Heart right ventricle (tissue), 16 donors: ENCODE measurements at regions of chr15 and their contacts with region 1.

Region 1: GRCh38 chr15:49923671-49924070 is 195.4 kb downstream of the ATP8B4 start:
- DNase-seq: no peak
- ATAC-seq: no peak
- H3K4me3 ChIP-seq: no peak overlapping the region
- H3K27ac ChIP-seq: no peak overlapping the region
- H3K4me1 ChIP-seq: peaks cover 0 to 9% (median 2%) of the 10 kb centered on the region in 9 donors
- H3K27me3 ChIP-seq: no peaks in the 10 kb centered on the region
- CTCF ChIP-seq: no peak

Region 2: DNA sequence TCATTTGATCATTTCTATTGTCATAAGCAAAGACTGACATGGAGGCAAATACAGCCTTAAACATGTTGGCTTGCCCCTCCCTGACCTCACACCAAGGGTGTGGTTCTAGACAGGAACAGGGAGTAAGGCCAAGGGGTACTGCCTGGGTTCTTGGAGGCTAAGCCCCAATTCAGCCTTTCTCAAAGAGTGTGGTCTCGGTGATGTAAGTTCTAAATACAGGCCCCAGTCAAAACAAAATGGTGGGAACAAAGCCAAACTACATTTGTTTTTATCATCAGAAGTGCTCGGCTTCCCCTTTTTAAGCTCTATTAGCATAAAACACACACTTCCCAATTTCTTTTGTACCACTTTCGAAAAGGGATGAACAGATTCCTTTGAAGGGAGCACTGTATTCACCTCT is 65.8 kb after region 1 on chr15:
- intact Hi-C with region 1: loop called in 1 of 10 experiments (anchors 5 kb)
- DNase-seq: no peak
- ATAC-seq: peak in 7 of 8 donors; percentile 62 to 87 (median 78)
- H3K4me3 ChIP-seq: no peak overlapping the region
- H3K27ac ChIP-seq: peak overlapping the region in 9 of 10 donors; percentile 22 to 69 (median 55)
- H3K4me1 ChIP-seq: peaks cover 0 to 61% (median 25%) of the 10 kb centered on the region in 9 donors
- H3K27me3 ChIP-seq: no peaks in the 10 kb centered on the region
- CTCF ChIP-seq: no peak